ENCODE measurements at regions of chr14 and their contacts with region 1.

Region 1: GRCh38 chr14:22549981-22550673 is 38.9 kb downstream of the DAD1 start:
- DNase-seq: peak; percentile 89
- H3K4me3 Mint-ChIP-seq: peak overlapping the region; percentile 67
- H3K27ac Mint-ChIP-seq: peak overlapping the region; percentile 98
- H3K4me1 Mint-ChIP-seq: peaks cover 92% of the 10 kb centered on the region
- H3K27me3 Mint-ChIP-seq: no peaks in the 10 kb centered on the region

Region 2: GRCh38 chr14:22526218-22526617 is 23.9 kb before region 1 on chr14:
- CTCF ChIA-PET with region 1: interaction called, 15 read pairs
- intact Hi-C with region 1: loop called (anchors 1 kb)
- DNase-seq: no peak
- H3K4me3 Mint-ChIP-seq: peak overlapping the region; percentile 91
- H3K27ac Mint-ChIP-seq: peak overlapping the region; percentile 98
- H3K4me1 Mint-ChIP-seq: peaks cover 80% of the 10 kb centered on the region
- H3K27me3 Mint-ChIP-seq: no peaks in the 10 kb centered on the region

Region 3: DNA sequence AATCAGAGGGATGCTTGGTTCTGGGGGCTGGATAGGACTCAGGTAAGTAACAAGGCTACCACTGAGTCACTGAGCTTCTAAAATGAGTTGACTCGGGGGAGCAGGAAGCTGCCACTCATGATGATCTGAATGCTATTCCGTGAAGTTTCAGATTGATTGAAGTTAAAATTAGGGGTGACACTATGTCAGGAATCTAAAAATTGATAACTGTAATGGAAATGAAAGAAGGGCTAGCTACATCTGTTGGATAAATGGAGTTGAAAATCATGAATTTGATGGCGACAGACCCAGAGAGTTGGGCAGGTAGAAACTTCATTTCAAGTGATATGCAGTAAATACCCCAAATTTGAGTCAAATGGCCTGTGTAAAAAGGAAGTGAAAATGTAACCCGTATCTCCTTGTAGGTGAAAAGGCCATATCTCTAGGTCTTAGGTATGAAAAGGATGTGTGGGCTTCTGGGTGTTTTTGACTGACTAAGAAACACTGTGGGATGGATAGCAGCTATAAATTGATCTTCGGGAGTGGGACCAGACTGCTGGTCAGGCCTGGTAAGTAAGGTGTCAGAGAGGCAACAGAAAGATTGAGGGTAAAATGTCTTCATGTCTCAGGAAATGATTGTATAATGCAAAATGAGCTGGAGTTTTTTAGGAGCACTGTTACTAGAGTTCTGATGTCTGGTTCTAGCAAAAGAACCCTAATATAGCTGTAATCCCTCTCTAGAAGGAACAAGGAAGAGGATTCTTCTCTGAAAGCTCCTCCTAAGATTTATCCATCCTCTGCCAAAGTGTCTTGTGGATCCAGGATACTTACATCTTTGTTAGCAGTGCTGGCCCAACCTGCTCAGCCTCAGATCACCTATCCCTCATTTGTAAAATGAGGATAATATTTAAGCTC is 18.4 kb before region 1 on chr14:
- CTCF ChIA-PET with region 1: interaction called, 67 read pairs
- intact Hi-C with region 1: loop called (anchors 1 kb)
- DNase-seq: peak; percentile 65
- H3K4me3 Mint-ChIP-seq: peak overlapping the region; percentile 77
- H3K27ac Mint-ChIP-seq: peak overlapping the region; percentile 98
- H3K4me1 Mint-ChIP-seq: peaks cover 82% of the 10 kb centered on the region
- H3K27me3 Mint-ChIP-seq: no peaks in the 10 kb centered on the region

Measured in activated naive CD4-positive, alpha-beta T cell treated with anti-CD3 and anti-CD28 coated beads for 36 hours (primary cell).